B cell (primary cell): ENCODE measurements at regions of chr5 and their contacts with region 1.

Region 1: GRCh38 chr5:135053278-135053677 is 19.2 kb upstream of the PITX1 start:
- DNase-seq: peak; percentile 92
- ATAC-seq: peak; percentile 89
- H3K4me3 ChIP-seq: peak overlapping the region in 3 of 5 experiments; percentile 9 to 48 (median 27)
- H3K4me3 Mint-ChIP-seq: peak overlapping the region; percentile 85
- H3K27ac ChIP-seq: peak overlapping the region; percentile 29 to 50
- H3K27ac Mint-ChIP-seq: peak overlapping the region; percentile 74
- H3K4me1 ChIP-seq: peaks cover 48 to 55% of the 10 kb centered on the region in 2 donors
- H3K4me1 Mint-ChIP-seq: peaks cover 57% of the 10 kb centered on the region
- H3K27me3 ChIP-seq: peaks cover 0 to 53% (median 29%) of the 10 kb centered on the region in 4 experiments
- H3K27me3 Mint-ChIP-seq: peaks cover 53% of the 10 kb centered on the region
- CTCF ChIP-seq: no peak

Region 2: DNA sequence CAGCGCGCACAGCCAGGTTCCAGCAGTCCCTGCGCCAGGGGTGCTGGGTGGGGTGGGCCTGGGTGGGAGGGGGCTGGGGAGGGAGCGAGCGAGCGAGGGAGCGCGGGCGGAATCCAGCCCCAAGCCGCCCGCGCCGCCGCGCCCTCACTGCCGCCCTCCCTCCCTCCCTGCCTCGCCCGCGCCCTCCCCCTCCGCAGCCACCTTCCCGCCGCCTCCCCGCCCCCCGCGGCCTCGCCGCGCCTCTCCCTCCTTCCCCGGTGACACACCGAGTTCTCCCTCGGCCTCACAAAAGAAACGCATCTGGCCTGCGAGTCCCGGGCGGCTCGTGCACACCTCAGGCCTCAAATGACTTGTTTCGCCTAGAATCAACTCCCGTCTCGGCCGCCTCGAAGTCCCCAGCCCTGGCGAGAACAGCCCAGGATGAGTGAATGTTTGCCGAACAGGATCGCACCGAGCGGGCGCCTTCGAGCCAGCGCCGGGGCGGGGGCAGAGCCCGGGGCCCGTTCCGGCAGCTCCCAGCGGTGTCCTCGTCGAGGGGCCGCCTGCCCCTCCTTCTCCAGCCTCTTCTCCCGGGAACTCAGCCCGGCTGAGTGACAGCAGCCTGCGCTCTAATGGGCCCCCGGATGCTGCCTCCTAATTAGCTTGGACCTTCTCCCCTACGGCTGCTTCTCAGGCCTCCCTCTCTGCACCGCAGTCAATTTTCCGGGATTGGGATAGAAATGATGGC is 18.9 kb before region 1 on chr5:
- CTCF ChIA-PET with region 1: interaction called, 6 read pairs
- POLR2A ChIA-PET with region 1: interaction called, 8 read pairs
- intact Hi-C with region 1: loop called (anchors 2 kb)
- DNase-seq: peak; percentile 60
- ATAC-seq: peak; percentile 42
- H3K4me3 ChIP-seq: peak overlapping the region in 3 of 5 experiments; percentile 34 to 68 (median 52)
- H3K4me3 Mint-ChIP-seq: peak overlapping the region; percentile 85
- H3K27ac ChIP-seq: no peak overlapping the region
- H3K27ac Mint-ChIP-seq: no peak overlapping the region
- H3K4me1 ChIP-seq: peaks cover 51 to 78% of the 10 kb centered on the region in 2 donors
- H3K4me1 Mint-ChIP-seq: peaks cover 53% of the 10 kb centered on the region
- H3K27me3 ChIP-seq: peaks cover 0 to 90% (median 75%) of the 10 kb centered on the region in 4 experiments
- H3K27me3 Mint-ChIP-seq: peaks cover 70% of the 10 kb centered on the region
- CTCF ChIP-seq: no peak

Region 3: GRCh38 chr5:135039271-135040045 is 13.8 kb before region 1 on chr5:
- CTCF ChIA-PET with region 1: interaction called, 6 read pairs
- POLR2A ChIA-PET with region 1: interaction called, 3 read pairs
- intact Hi-C with region 1: loop called (anchors 1 kb)
- DNase-seq: peak; percentile 74
- ATAC-seq: peak; percentile 39
- H3K4me3 ChIP-seq: peak overlapping the region in 4 of 5 experiments; percentile 12 to 34 (median 24)
- H3K4me3 Mint-ChIP-seq: peak overlapping the region; percentile 68
- H3K27ac ChIP-seq: no peak overlapping the region
- H3K27ac Mint-ChIP-seq: no peak overlapping the region
- H3K4me1 ChIP-seq: peaks cover 35 to 52% of the 10 kb centered on the region in 2 donors
- H3K4me1 Mint-ChIP-seq: peaks cover 35% of the 10 kb centered on the region
- H3K27me3 ChIP-seq: peaks cover 0 to 91% (median 72%) of the 10 kb centered on the region in 4 experiments
- H3K27me3 Mint-ChIP-seq: peaks cover 69% of the 10 kb centered on the region
- CTCF ChIP-seq: no peak